ENCODE measurements at regions of chr11 and their contacts with region 1.

Region 1: GRCh38 chr11:66835768-66836405 is 7.4 kb upstream of the RCE1 start:
- DNase-seq: no peak
- H3K4me3 Mint-ChIP-seq: no peak overlapping the region
- H3K27ac Mint-ChIP-seq: no peak overlapping the region
- H3K4me1 Mint-ChIP-seq: peaks cover 22% of the 10 kb centered on the region
- H3K27me3 Mint-ChIP-seq: no peaks in the 10 kb centered on the region

Region 2: DNA sequence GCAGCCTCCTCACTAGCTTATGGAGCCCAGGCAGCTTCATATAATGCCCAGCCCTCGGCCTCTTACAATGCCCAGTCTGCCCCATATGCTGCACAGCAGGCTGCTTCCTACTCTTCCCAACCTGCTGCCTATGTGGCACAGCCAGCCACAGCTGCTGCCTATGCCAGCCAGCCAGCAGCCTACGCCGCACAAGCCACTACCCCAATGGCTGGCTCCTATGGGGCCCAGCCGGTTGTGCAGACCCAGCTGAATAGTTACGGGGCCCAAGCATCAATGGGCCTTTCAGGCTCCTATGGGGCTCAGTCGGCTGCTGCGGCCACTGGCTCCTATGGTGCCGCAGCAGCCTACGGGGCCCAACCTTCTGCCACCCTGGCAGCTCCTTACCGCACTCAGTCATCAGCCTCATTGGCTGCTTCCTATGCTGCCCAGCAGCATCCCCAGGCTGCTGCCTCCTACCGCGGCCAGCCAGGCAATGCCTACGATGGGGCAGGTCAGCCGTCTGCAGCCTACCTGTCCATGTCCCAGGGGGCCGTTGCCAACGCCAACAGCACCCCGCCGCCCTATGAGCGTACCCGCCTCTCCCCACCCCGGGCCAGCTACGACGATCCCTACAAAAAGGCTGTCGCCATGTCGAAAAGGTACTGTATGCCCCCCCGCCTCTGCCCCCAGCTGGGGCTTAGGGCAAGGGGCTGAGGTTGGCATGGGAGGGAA is 210.7 kb before region 1 on chr11:
- CTCF ChIA-PET with region 1: no interaction called
- POLR2A ChIA-PET with region 1: no interaction called
- intact Hi-C with region 1: no loop called
- DNase-seq: no peak
- H3K4me3 Mint-ChIP-seq: no peak overlapping the region
- H3K27ac Mint-ChIP-seq: no peak overlapping the region
- H3K4me1 Mint-ChIP-seq: peaks cover 61% of the 10 kb centered on the region
- H3K27me3 Mint-ChIP-seq: no peaks in the 10 kb centered on the region

Region 3: GRCh38 chr11:66694732-66695207 is 141.1 kb before region 1 on chr11:
- CTCF ChIA-PET with region 1: interaction called, 57 read pairs
- POLR2A ChIA-PET with region 1: no interaction called
- intact Hi-C with region 1: loop called (anchors 1 kb)
- DNase-seq: peak; percentile 91
- H3K4me3 Mint-ChIP-seq: no peak overlapping the region
- H3K27ac Mint-ChIP-seq: no peak overlapping the region
- H3K4me1 Mint-ChIP-seq: no peaks in the 10 kb centered on the region
- H3K27me3 Mint-ChIP-seq: no peaks in the 10 kb centered on the region

Region 4: DNA sequence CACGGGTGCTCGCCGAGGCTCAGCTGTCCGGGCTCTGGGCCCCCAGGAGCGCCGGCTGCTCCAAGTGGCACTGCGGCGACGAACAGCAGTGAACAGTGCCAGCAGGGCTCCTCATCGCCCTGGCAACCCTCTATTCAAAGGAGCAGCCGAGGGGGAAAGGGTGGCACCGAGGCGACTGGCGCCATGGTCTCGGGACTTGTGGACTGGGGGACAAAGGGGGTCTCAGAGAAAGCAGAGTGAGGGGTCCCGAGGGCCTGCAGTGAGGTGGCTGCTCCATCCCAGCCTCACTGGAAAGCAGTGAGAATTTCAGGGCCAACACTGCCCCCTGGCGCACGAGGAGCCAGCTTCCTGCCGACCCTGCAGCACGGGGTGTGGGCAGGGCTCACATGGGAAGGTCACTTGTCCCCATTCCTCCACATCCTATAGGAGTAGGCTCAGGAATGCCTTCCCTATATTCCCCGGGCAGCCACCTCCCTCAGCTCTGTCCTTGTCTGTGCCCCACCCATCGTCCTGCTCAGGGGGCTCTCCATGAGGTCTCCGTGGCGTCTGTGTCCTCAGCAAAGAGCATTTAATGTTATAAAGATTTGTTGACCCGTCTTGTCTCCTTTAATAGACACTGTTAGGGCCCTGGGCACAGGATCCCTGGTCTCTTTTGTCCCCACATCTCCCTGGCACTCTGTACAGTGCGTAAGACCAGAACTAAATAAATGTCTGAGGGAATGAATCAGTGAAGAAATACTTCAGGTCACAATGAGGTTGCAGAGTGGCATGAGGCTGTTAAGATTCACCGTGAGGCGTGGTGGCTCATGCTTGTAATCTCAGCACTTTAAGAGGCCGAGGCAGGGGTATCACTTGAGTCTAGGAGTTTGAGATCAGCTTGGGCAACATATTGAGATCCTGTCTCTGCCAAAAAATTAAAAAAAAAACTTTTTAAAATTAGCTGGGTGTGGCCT is 47.4 kb after region 1 on chr11:
- CTCF ChIA-PET with region 1: interaction called, 4 read pairs
- POLR2A ChIA-PET with region 1: no interaction called
- intact Hi-C with region 1: loop called (anchors 1 kb)
- DNase-seq: peak; percentile 78
- H3K4me3 Mint-ChIP-seq: no peak overlapping the region
- H3K27ac Mint-ChIP-seq: no peak overlapping the region
- H3K4me1 Mint-ChIP-seq: peaks cover 15% of the 10 kb centered on the region
- H3K27me3 Mint-ChIP-seq: no peaks in the 10 kb centered on the region